Activated B cell treated with CpG ODN at 0.5 μM for 24 hours (primary cell): ENCODE measurements at regions of chr18 and their contacts with region 1.

Region 1: GRCh38 chr18:59056706-59057492 is 82.8 kb upstream of the SEC11C start:
- DNase-seq: peak; percentile 72
- ATAC-seq: peak; percentile 95
- H3K4me3 Mint-ChIP-seq: no peak overlapping the region
- H3K27ac Mint-ChIP-seq: peak overlapping the region; percentile 37
- H3K4me1 Mint-ChIP-seq: peaks cover 10% of the 10 kb centered on the region
- H3K27me3 Mint-ChIP-seq: no peaks in the 10 kb centered on the region
- CTCF ChIP-seq: no peak

Region 2: DNA sequence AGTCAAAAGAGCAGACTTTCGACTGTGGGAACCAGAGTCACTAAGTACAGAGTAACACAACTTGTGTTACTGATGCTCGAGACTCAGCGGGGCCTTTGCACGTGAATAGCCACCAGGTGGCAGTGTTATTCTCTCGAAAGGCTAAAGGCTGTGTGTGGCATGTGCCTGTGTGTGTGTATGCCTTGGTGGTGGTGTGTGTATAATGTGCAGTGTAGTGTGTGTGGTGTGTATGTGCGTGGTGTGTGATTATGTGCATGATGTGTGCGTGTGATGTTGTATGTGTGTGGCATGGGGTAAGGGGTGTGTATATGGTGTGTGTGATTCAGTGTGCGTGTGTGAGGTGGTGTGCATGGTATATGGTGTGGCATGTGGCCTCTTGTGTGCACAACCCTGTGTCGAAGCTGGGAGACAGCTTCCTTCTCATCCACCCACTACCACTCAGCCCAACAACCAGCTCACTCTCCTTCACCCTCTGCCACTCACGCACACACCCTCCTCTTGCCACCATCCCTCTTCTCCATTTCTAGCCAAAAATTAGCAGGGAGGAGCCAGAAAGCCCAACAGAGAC is 275.2 kb before region 1 on chr18:
- CTCF ChIA-PET with region 1: interaction called, 60 read pairs
- POLR2A ChIA-PET with region 1: interaction called, 3 read pairs
- intact Hi-C with region 1: loop called (anchors 1 kb)
- DNase-seq: peak; percentile 44
- ATAC-seq: peak; percentile 94
- H3K4me3 Mint-ChIP-seq: no peak overlapping the region
- H3K27ac Mint-ChIP-seq: no peak overlapping the region
- H3K4me1 Mint-ChIP-seq: peaks cover 2% of the 10 kb centered on the region
- H3K27me3 Mint-ChIP-seq: no peaks in the 10 kb centered on the region
- CTCF ChIP-seq: no peak

Region 3: GRCh38 chr18:58863539-58864145 is 193.3 kb before region 1 on chr18:
- CTCF ChIA-PET with region 1: interaction called, 4 read pairs
- POLR2A ChIA-PET with region 1: no interaction called
- intact Hi-C with region 1: loop called (anchors 2 kb)
- DNase-seq: peak; percentile 61
- ATAC-seq: peak; percentile 66
- H3K4me3 Mint-ChIP-seq: peak overlapping the region; percentile 76
- H3K27ac Mint-ChIP-seq: peak overlapping the region; percentile 85
- H3K4me1 Mint-ChIP-seq: peaks cover 32% of the 10 kb centered on the region
- H3K27me3 Mint-ChIP-seq: no peaks in the 10 kb centered on the region
- CTCF ChIP-seq: no peak

Region 4: GRCh38 chr18:58960946-58961722 is 95.8 kb before region 1 on chr18:
- CTCF ChIA-PET with region 1: interaction called, 5 read pairs
- POLR2A ChIA-PET with region 1: interaction called, 12 read pairs
- intact Hi-C with region 1: loop called (anchors 1 kb)
- DNase-seq: no peak
- ATAC-seq: no peak
- H3K4me3 Mint-ChIP-seq: peak overlapping the region; percentile 29
- H3K27ac Mint-ChIP-seq: peak overlapping the region; percentile 81
- H3K4me1 Mint-ChIP-seq: peaks cover 53% of the 10 kb centered on the region
- H3K27me3 Mint-ChIP-seq: no peaks in the 10 kb centered on the region
- CTCF ChIP-seq: no peak

Region 5: GRCh38 chr18:59005262-59005661 is 51.6 kb before region 1 on chr18:
- CTCF ChIA-PET with region 1: no interaction called
- POLR2A ChIA-PET with region 1: no interaction called
- intact Hi-C with region 1: loop called (anchors 5 kb)
- DNase-seq: no peak
- ATAC-seq: no peak
- H3K4me3 Mint-ChIP-seq: no peak overlapping the region
- H3K27ac Mint-ChIP-seq: no peak overlapping the region
- H3K4me1 Mint-ChIP-seq: no peaks in the 10 kb centered on the region
- H3K27me3 Mint-ChIP-seq: no peaks in the 10 kb centered on the region
- CTCF ChIP-seq: no peak